ENCODE measurements at regions of chr15 and their contacts with region 1.

Region 1: GRCh38 chr15:38354315-38354929 is 99.5 kb upstream of the FAM98B start:
- DNase-seq: no peak
- H3K4me3 ChIP-seq: no peak overlapping the region
- H3K27ac ChIP-seq: no peak overlapping the region
- H3K4me1 ChIP-seq: peaks cover 0 to 3% (median 0%) of the 10 kb centered on the region in 4 donors
- H3K27me3 ChIP-seq: no peaks in the 10 kb centered on the region
- CTCF ChIP-seq: peak; percentile 71 to 82 (median 81)
- EP300 ChIP-seq: no peak
- POLR2A ChIP-seq: no peak

Region 2: DNA sequence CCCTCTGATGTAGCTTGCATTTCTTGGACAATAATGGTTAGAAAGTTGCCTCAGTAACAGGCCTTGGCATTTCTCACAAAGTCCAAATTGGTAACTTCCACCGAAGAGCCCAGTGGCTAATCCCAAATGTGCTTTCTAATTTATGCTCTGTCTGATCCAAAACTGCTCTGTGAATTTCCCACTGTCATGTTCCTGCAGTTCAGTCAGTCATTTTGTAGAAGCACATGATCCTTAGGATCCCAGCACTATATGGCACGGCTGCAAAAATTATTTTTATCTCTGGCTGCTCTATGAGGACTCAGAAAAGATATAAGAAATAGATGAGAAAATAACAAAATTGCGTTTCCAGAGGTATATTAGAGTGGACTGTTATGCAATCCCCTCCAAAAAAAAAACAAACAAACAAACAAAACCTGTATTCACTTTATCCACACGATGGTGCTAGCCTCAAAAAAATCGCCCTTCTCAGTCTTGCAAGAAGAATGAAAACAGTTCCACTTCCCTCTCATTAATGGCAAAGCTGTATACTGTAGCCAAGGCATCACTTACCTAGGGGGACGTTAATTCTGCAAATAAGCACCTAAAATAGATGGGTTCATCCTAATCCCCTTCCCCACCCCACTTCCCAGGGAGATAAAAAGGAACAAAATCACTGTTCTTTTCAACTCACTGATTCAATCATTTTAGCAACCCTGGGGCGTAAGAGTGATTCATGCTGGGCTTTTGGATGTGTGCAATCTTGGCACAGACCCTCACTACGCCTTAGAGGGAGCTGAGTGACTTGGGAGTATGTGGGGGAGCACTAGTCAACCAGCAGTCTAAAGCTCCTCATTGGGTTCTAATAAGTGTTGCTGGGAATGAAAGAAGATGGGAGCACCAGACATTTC is 358.7 kb before region 1 on chr15:
- intact Hi-C with region 1: loop called (anchors 1 kb)
- DNase-seq: no peak
- H3K4me3 ChIP-seq: no peak overlapping the region
- H3K27ac ChIP-seq: no peak overlapping the region
- H3K4me1 ChIP-seq: peaks cover 0 to 5% (median 2%) of the 10 kb centered on the region in 4 donors
- H3K27me3 ChIP-seq: no peaks in the 10 kb centered on the region
- CTCF ChIP-seq: peak; percentile 43 to 57 (median 51)
- EP300 ChIP-seq: no peak
- POLR2A ChIP-seq: no peak

Region 3: DNA sequence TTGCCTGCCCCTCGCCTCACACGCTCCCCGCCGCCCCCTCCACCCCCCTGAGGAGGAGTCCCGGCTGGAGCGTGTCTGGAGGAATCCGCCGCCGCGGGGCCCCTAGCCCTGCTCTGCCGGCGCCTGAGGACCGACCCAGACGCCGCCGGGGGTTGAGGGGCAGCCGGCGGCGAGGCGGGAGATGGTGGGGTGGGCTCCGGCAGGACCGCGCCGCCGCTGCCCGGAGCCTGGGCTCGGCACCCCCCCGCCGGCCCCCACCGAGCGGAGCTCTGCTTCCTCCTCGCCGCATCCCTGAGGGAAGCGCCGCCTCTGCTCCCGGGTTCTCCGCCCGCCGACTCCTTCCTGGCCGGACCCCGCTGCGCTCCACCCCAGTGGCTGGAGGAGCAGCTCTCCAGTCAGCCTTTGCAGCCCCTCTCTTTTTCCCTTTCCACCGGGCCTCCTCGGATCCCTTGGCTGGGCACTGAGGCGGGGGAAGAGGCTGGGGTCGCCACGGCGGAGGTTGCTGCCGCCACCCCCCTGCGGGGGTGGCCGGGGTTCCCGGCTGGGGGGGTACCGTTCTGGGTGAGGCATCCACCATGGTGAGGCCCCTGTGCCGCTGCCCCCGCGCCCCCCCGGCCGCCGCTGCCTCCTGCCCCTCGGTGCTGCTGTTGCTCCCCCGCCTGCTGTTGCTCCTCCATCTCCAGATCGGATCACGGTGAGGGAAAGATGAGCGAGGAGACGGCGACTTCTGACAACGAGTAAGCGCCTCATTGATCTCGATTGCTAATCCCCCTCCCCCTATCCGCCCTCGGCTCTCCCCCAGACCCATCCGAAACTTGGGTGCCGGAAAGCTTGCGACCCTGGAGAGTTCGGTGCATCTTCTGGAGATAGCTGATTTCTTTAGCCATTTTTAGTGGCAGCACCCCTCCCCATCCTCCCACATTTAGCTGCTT is 101.7 kb before region 1 on chr15 and contains the start of gene SPRED1:
- intact Hi-C with region 1: loop called (anchors 5 kb)
- DNase-seq: no peak
- H3K4me3 ChIP-seq: peak within 1 kb of the TSS; percentile 91 to 99 (median 98)
- H3K27ac ChIP-seq: peak within 1 kb of the TSS; percentile 99 to 100 (median 99)
- H3K4me1 ChIP-seq: peaks cover 13 to 56% (median 39%) of the 10 kb centered on the region in 4 donors
- H3K27me3 ChIP-seq: no peaks in the 10 kb centered on the region
- CTCF ChIP-seq: no peak
- EP300 ChIP-seq: no peak
- POLR2A ChIP-seq: no peak
- total RNA-seq, gene SPRED1: 14.5 to 31.1 (median 19.0) TPM

Region 4: GRCh38 chr15:38401106-38401505 is 46.7 kb after region 1 on chr15:
- intact Hi-C with region 1: loop called (anchors 5 kb)
- DNase-seq: no peak
- H3K4me3 ChIP-seq: no peak overlapping the region
- H3K27ac ChIP-seq: no peak overlapping the region
- H3K4me1 ChIP-seq: peaks cover 0 to 11% (median 7%) of the 10 kb centered on the region in 4 donors
- H3K27me3 ChIP-seq: peaks cover 0 to 8% (median 0%) of the 10 kb centered on the region in 4 donors
- CTCF ChIP-seq: no peak
- EP300 ChIP-seq: no peak
- POLR2A ChIP-seq: no peak